Heart left ventricle (tissue), 16 donors: ENCODE measurements at regions of chr1 and their contacts with region 1.

Region 1: DNA sequence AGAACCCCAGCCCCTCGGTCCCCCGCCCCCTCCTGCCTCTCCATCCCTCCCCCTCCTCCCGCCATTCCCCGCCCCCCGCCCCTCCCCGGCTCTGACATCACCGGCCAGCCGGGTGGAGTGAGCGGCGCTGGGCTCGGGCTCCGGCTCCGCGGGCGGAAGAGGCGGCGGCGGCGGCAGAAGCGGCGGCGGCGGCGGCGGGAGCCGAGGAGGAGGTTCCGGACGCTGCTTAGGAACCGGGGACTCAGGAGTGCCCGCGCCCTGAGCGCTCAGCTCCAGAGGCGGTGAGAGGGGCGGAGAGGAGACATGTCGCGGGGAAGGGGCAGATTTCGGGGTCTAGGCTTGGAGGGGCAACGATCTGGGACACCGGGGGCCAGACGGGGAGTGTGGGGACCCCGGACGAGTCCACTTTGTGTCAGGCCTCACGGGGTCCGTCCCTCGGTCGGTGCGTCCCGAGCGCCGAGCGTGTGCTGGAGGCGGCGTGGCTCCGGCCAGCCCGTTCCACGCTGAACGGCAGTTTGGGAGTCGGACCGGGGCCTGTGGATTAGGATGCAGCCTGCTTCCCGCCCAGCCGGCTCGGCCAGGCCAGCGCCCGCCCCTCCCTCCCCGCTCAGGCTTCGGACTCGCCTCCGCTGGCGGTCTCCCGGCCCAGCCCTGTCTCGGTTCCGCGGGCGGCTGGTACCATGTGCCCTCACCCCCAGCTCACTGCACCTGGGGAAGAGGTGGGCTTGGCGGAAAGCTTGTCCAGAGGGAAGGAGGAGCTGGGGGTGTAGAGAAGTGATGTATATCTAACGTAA is at the start of gene PEA15:
- DNase-seq: peak; percentile 80 to 91 (median 86)
- ATAC-seq: peak; percentile 60 to 85 (median 80)
- H3K4me3 ChIP-seq: peak within 1 kb of the TSS; percentile 60 to 99 (median 88)
- H3K27ac ChIP-seq: peak within 1 kb of the TSS; percentile 67 to 98 (median 90)
- H3K4me1 ChIP-seq: peaks cover 22 to 60% (median 53%) of the 10 kb centered on the region in 12 donors
- H3K27me3 ChIP-seq: no peaks in the 10 kb centered on the region
- CTCF ChIP-seq: no peak
- POLR2A ChIP-seq: peak; percentile 10 to 83
- total RNA-seq, gene PEA15: 134 to 581 (median 290) TPM

Region 2: GRCh38 chr1:160244209-160244608 is 38.8 kb after region 1 on chr1:
- intact Hi-C with region 1: loop called in 2 of 10 experiments (anchors 5 kb)
- DNase-seq: no peak
- ATAC-seq: peak in 1 of 4 donors; percentile 13
- H3K4me3 ChIP-seq: no peak overlapping the region
- H3K27ac ChIP-seq: peak overlapping the region in 10 of 12 donors; percentile 9 to 60 (median 28)
- H3K4me1 ChIP-seq: peaks cover 7 to 53% (median 37%) of the 10 kb centered on the region in 12 donors
- H3K27me3 ChIP-seq: no peaks in the 10 kb centered on the region
- CTCF ChIP-seq: no peak
- POLR2A ChIP-seq: no peak

Region 3: DNA sequence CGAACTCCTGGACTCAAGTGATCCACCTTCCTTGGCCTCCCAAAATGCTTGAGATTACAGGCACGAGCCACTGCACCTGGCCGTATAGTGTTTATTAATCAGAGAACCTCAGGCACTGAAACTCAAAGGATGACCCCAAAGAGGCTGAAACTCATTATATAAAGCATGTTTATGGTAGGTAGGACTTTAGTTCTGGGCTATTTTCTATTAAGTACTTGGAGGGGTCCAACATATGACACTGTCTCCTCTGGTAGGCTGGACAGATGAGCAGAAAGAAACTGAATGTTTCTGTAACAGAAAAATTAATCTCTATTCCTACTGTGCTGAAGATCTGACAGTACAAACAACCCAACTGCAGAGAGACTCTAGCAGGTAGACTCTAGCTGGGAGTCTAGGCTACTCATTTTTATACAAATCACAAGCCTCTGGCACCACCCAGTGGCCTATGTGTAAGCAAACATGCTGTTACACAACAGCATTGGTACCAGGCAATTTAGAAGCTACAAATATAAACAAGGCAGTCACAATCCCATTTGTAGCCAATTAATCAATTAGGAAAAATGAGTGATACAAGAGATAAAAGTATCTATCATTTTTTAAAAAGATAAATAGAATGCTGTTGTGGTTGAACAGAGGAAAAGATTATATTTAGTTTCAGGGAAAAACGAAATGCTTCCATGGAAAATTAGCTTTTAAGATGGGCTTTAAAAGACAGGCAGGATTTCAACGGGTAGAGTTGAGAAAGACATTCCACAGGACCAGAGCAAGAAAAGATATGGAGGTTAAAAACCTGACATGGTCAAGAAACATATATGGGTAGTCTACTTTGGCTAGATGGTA is 46.5 kb after region 1 on chr1:
- intact Hi-C with region 1: loop called in 2 of 10 experiments (anchors 5 kb)
- DNase-seq: peak in 4 of 5 donors; percentile 58 to 72 (median 64)
- ATAC-seq: peak; percentile 90 to 95 (median 94)
- H3K4me3 ChIP-seq: no peak overlapping the region
- H3K27ac ChIP-seq: peak overlapping the region in 8 of 12 donors; percentile 15 to 59 (median 41)
- H3K4me1 ChIP-seq: peaks cover 0 to 50% (median 27%) of the 10 kb centered on the region in 12 donors
- H3K27me3 ChIP-seq: no peaks in the 10 kb centered on the region
- CTCF ChIP-seq: peak; percentile 48 to 82 (median 68)
- POLR2A ChIP-seq: no peak